Mammary epithelial cell (primary cell): ENCODE measurements at regions of chr11 and their contacts with region 1.

Region 1: DNA sequence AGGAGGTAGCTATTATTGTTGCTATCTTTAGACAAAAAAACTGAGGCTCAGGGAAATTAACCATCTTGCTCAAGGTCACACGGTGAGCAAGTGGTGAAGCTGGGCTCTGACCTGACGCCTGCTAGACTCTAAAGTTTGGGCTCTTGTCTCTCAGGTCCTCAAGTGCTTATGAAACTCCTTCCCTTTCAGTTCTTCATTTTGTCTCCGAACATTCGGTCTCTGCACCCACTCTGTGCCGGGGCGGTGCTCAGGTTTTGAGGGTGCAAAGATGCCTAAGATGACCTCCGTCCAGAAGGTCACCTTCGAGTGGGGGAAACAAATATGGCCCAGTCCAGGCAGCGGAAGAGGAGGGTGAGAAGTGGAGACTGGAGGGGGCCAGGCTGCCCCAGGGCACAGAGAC is 16.0 kb downstream of the OVOL1 start:
- DNase-seq: no peak
- H3K4me3 ChIP-seq: no peak overlapping the region
- H3K27ac ChIP-seq: no peak overlapping the region
- H3K4me1 ChIP-seq: no peaks in the 10 kb centered on the region
- H3K27me3 ChIP-seq: peaks cover 7% of the 10 kb centered on the region
- CTCF ChIP-seq: no peak

Region 2: GRCh38 chr11:65791691-65792213 is 11.1 kb before region 1 on chr11:
- CTCF ChIA-PET with region 1: interaction called, 12 read pairs
- dilution Hi-C with region 1: no loop called
- in situ Hi-C with region 1: no loop called
- intact Hi-C with region 1: no loop called
- DNase-seq: peak; percentile 46
- H3K4me3 ChIP-seq: no peak overlapping the region
- H3K27ac ChIP-seq: peak overlapping the region; percentile 76
- H3K4me1 ChIP-seq: peaks cover 53% of the 10 kb centered on the region
- H3K27me3 ChIP-seq: no peaks in the 10 kb centered on the region
- CTCF ChIP-seq: no peak